ENCODE measurements at regions of chr6 and their contacts with region 1.

Region 1: GRCh38 chr6:156776840-156777576 is at the start of gene ARID1B:
- DNase-seq: peak; percentile 80 to 88 (median 82)
- H3K4me3 ChIP-seq: peak within 1 kb of the TSS; percentile 79
- H3K27ac ChIP-seq: peak within 1 kb of the TSS; percentile 96 to 100
- H3K4me1 ChIP-seq: peaks cover 2% of the 10 kb centered on the region
- H3K27me3 ChIP-seq: no peaks in the 10 kb centered on the region
- CTCF ChIP-seq: peak in 1 of 3 donors; percentile 11
- EP300 ChIP-seq: no peak
- POLR2A ChIP-seq: peak; percentile 38
- total RNA-seq, gene ARID1B: 96.3 to 144 (median 106) TPM

Region 2: DNA sequence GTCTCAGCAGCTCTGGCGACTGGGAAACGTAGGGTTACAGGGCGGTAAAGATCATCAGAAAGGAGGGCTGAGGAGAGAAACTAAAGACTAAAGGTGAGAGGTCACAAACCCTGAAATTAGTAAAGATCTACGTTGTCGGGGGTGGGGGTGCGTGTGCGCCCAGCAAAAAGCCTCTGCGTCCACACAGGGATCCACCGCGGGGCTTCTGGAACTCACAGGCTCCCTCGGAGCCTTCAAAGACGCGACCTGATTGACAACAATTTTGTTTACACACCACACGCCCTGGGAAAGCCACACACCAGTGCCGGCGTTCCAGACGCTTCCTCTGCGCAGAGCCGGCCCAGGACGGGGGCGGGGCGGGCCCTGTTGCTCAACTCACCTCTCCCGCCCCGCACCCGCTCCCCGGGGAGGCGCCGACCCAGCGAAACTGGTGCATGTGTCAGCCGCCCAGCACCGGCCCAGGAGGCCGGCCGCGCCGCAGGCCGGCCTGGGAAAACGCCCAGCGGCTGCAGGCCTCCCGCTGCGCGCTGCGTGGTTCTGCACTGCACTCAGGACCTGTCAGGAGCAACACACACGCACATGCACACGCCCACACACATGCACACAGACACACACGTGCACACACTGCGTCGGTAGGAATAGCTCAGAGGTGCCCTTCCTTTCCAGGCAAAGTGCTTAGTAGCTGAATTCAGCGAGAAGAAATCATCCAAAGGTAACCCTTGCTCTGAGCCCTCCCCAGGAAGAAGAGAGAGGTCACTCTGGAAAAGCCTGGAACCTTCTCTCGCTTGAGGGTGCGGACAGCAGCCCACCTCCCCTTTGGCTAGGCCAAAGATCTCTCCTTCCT is 57.1 kb before region 1 on chr6:
- intact Hi-C with region 1: loop called in 2 of 4 experiments (anchors 2 to 5 kb)
- DNase-seq: peak; percentile 93 to 97 (median 95)
- H3K4me3 ChIP-seq: peak overlapping the region; percentile 38
- H3K27ac ChIP-seq: peak overlapping the region; percentile 70 to 96
- H3K4me1 ChIP-seq: peaks cover 14% of the 10 kb centered on the region
- H3K27me3 ChIP-seq: no peaks in the 10 kb centered on the region
- CTCF ChIP-seq: no peak
- EP300 ChIP-seq: no peak
- POLR2A ChIP-seq: no peak

Region 3: DNA sequence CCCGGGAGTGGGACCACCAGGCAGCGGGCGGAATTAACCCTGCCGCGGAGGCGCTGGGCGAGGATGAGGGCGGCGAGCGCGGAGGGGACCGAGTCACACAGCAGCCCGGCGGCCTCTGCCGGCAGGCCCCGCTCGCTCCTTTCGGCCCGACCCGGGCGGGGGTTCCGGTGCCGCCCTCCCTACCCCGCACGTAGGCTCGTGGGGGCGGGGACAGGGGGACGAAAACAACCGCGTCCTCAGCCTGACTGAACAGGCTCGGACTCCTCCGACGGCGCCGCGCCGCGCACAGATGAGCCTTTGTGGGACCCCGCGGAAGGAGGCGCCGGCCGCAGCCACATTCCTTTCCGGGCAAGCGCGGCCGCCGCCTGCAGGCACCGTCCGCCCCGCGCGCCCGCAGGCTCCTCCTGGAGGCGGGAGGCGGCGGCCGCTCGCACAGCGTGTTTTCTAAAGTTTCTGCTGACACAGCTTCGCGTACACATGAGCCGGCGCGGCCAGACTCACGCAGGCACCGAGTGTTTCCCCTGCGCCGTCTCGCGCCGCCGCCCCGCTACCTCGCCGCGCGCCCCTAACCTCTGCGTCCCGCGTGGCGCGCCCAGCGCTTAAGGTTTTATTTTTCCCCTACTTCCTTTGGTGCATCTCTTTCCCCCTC is 244.5 kb after region 1 on chr6:
- intact Hi-C with region 1: loop called in 3 of 4 experiments (anchors 2 to 10 kb)
- DNase-seq: peak; percentile 90 to 93 (median 93)
- H3K4me3 ChIP-seq: peak overlapping the region; percentile 88
- H3K27ac ChIP-seq: peak overlapping the region; percentile 98 to 99
- H3K4me1 ChIP-seq: peaks cover 10% of the 10 kb centered on the region
- H3K27me3 ChIP-seq: no peaks in the 10 kb centered on the region
- CTCF ChIP-seq: peak in 2 of 3 donors; percentile 44 to 57
- EP300 ChIP-seq: no peak
- POLR2A ChIP-seq: peak; percentile 95